OCI-LY7 (cell line): ENCODE measurements at regions of chr12 and their contacts with region 1.

Region 1: DNA sequence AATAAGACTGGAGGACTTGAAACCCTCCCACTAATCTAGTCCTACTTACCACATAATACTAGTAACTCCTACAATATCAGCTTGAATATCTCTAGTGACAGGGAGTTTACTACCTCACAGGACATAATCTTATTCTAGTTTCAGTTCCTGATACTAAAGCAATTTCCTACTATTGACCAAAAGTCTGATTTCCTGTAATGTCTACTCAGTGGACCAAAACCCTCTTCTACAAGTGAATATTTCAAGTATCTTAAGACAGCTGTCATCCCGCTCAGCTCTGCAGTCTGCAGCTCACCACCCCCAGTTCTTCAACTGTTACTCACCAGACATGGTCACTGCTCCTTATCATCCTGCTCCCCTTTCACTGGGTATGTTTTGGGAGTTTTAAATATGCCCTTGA is 70.8 kb upstream of the TMCC3 start:
- DNase-seq: peak; percentile 87
- H3K4me3 ChIP-seq: peak overlapping the region; percentile 38
- H3K27ac ChIP-seq: peak overlapping the region; percentile 92
- H3K4me1 ChIP-seq: peaks cover 64% of the 10 kb centered on the region
- CTCF ChIP-seq: no peak

Region 2: GRCh38 chr12:94710933-94711332 is 10.2 kb before region 1 on chr12:
- CTCF ChIA-PET with region 1: interaction called, 7 read pairs
- POLR2A ChIA-PET with region 1: interaction called, 11 read pairs
- intact Hi-C with region 1: no loop called
- DNase-seq: peak; percentile 75
- H3K4me3 ChIP-seq: no peak overlapping the region
- H3K27ac ChIP-seq: no peak overlapping the region
- H3K4me1 ChIP-seq: peaks cover 8% of the 10 kb centered on the region
- CTCF ChIP-seq: peak; percentile 84

Region 3: DNA sequence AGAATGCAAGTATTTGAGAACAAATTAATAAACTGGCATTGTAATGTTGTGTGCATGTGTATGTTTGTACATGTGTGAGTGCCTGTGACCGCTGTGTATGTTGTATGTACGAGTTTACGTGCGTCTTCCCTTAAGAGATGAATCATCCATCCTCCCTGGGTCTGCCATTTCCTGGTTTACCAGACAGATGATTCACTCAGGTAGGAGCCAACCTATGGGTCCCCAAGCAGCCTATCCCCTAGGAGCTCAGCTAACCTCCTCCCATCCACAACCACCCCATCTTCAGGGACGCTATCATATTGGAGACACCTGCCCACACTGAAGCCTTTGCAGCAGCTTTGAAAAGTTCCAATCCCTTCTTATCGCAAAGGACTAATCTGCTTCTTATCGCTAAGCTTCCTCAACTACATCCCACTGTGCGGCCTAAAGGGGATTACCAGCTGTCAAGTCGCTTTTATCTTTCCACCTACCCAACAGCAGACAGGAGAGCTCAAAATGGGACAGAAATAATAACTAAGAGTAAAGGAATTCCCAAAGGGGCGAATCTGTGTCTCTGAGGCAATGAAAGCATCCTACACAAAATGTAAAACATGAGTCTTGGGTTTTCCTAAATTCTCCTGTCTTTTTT is 10.7 kb after region 1 on chr12:
- CTCF ChIA-PET with region 1: no interaction called
- POLR2A ChIA-PET with region 1: interaction called, 10 read pairs
- intact Hi-C with region 1: no loop called
- DNase-seq: no peak
- H3K4me3 ChIP-seq: no peak overlapping the region
- H3K27ac ChIP-seq: no peak overlapping the region
- H3K4me1 ChIP-seq: peaks cover 14% of the 10 kb centered on the region
- CTCF ChIP-seq: no peak

Region 4: GRCh38 chr12:94762259-94762942 is 41.2 kb after region 1 on chr12:
- CTCF ChIA-PET with region 1: interaction called, 3 read pairs
- POLR2A ChIA-PET with region 1: interaction called, 11 read pairs
- intact Hi-C with region 1: no loop called
- DNase-seq: peak; percentile 50
- H3K4me3 ChIP-seq: no peak overlapping the region
- H3K27ac ChIP-seq: peak overlapping the region; percentile 5
- H3K4me1 ChIP-seq: peaks cover 35% of the 10 kb centered on the region
- CTCF ChIP-seq: no peak

Region 5: DNA sequence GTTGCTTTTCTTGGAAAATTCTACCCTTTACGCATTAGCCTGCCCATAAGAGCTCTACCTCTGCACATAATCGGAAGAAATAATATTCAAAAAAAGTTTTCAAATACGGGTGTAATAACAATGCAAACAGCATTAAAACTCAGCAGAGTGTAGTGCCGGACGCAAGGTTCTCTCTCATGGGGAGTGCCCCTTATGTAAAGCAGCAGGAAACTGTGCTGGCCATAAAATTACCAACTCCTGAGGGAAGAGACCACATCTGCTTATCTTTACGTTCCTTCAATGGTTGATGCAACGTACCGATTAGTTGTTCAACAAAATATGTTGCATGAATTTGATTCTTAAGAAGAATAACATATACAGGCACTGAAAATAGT is 47.9 kb after region 1 on chr12:
- CTCF ChIA-PET with region 1: no interaction called
- POLR2A ChIA-PET with region 1: interaction called, 11 read pairs
- intact Hi-C with region 1: no loop called
- DNase-seq: peak; percentile 90
- H3K4me3 ChIP-seq: peak overlapping the region; percentile 63
- H3K27ac ChIP-seq: peak overlapping the region; percentile 97
- H3K4me1 ChIP-seq: peaks cover 61% of the 10 kb centered on the region
- CTCF ChIP-seq: no peak

Region 6: GRCh38 chr12:94789510-94790225 is 68.5 kb after region 1 on chr12:
- CTCF ChIA-PET with region 1: no interaction called
- POLR2A ChIA-PET with region 1: no interaction called
- intact Hi-C with region 1: no loop called
- DNase-seq: no peak
- H3K4me3 ChIP-seq: no peak overlapping the region
- H3K27ac ChIP-seq: no peak overlapping the region
- H3K4me1 ChIP-seq: peaks cover 48% of the 10 kb centered on the region
- CTCF ChIP-seq: no peak

Region 7: DNA sequence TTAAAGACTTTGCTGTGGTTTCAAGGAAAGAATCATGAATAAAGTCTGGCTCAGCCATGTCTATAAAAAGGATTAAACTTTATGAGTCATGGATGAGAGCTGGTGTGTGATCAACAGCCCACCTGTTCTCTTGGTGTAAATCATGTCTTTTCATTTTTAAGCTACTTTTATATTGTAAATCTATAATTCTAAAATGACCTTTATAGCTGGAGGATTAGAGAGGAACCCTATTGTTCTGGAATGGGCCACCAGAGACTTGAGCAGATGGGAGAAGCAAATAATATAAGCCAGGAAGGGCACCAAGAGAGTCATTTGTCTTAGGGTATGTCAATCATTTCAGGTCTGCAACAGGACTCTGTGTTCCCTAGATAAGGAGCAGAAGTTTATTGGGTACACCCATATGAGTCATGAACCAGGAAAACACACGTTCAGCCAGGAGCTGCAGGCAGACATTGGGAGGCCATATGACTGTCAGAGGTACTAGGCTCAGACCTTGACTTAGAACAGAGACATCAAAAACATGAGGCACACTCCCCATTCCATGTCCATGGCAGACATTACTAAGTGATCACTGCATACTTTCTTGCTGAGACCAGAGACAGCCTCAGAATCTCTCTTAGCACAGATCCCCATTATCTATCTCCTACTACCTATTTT is 233.0 kb after region 1 on chr12:
- CTCF ChIA-PET with region 1: no interaction called
- POLR2A ChIA-PET with region 1: no interaction called
- intact Hi-C with region 1: no loop called
- DNase-seq: no peak
- H3K4me3 ChIP-seq: no peak overlapping the region
- H3K27ac ChIP-seq: no peak overlapping the region
- H3K4me1 ChIP-seq: no peaks in the 10 kb centered on the region
- CTCF ChIP-seq: no peak